Activated T-helper 2 cell treated with anti-CD3 and anti-CD28 coated beads, Interferon-gamma antibody, Interleukin-2, Interleukin-4, amounts not matched to agents 10 μg/mL and 5 μg/mL and 100 μg/mL, durations not matched to agents 14 hours and 24 hours and 36 hours (primary cell): ENCODE measurements at regions of chr5 and their contacts with region 1.

Region 1: GRCh38 chr5:55868846-55869245 is 17.7 kb downstream of the IL31RA start:
- DNase-seq: no peak
- H3K4me3 Mint-ChIP-seq: no peak overlapping the region
- H3K27ac Mint-ChIP-seq: peak overlapping the region; percentile 6
- H3K4me1 Mint-ChIP-seq: peaks cover 20% of the 10 kb centered on the region
- H3K27me3 Mint-ChIP-seq: no peaks in the 10 kb centered on the region

Region 2: GRCh38 chr5:55324815-55325418 is 543.9 kb before region 1 on chr5:
- intact Hi-C with region 1: no loop called
- DNase-seq: no peak
- H3K4me3 Mint-ChIP-seq: no peak overlapping the region
- H3K27ac Mint-ChIP-seq: peak overlapping the region; percentile 75
- H3K4me1 Mint-ChIP-seq: peaks cover 25% of the 10 kb centered on the region
- H3K27me3 Mint-ChIP-seq: no peaks in the 10 kb centered on the region

Region 3: DNA sequence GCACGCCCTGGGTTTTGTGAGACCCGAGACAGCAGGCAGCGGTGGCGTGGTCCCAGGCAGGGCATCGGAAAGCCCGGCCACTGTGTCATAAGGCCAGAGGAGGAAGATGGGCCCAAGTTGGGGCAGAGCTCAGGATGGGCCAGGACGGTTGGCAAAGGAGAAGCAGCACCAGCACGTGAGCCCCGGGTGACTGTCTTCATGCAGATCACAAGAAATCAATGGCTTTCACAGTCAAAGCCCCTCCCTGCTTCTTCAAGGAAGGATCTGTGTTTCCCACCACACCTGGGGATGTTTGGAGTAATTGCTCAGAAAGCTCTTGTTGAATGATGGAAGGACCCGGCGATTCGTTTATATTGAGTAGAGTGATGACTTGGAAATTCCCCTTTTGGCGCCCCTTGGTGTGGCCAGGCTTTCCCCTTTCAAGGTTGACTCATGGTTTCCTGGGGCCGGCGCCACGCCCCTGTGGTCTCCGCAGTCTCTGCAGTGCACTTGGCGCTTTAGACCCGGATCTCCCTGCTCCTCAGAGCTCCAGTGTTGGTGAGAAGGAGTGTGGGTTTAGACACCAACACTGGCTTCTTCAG is 34.4 kb after region 1 on chr5:
- intact Hi-C with region 1: loop called (anchors 2 kb)
- DNase-seq: peak; percentile 70
- H3K4me3 Mint-ChIP-seq: peak overlapping the region; percentile 13
- H3K27ac Mint-ChIP-seq: peak overlapping the region; percentile 60
- H3K4me1 Mint-ChIP-seq: peaks cover 45% of the 10 kb centered on the region
- H3K27me3 Mint-ChIP-seq: no peaks in the 10 kb centered on the region

Region 4: GRCh38 chr5:55994574-55995333 is 125.9 kb after region 1 on chr5 and contains the start of gene IL6ST:
- intact Hi-C with region 1: no loop called
- DNase-seq: peak; percentile 93
- H3K4me3 Mint-ChIP-seq: peak within 1 kb of the TSS; percentile 95
- H3K27ac Mint-ChIP-seq: peak within 1 kb of the TSS; percentile 94
- H3K4me1 Mint-ChIP-seq: peaks cover 53% of the 10 kb centered on the region
- H3K27me3 Mint-ChIP-seq: no peaks in the 10 kb centered on the region
- total RNA-seq, gene IL6ST: 56.2 and 67.2 TPM in 2 replicates